ENCODE measurements at regions of chr6 and their contacts with region 1.

Region 1: DNA sequence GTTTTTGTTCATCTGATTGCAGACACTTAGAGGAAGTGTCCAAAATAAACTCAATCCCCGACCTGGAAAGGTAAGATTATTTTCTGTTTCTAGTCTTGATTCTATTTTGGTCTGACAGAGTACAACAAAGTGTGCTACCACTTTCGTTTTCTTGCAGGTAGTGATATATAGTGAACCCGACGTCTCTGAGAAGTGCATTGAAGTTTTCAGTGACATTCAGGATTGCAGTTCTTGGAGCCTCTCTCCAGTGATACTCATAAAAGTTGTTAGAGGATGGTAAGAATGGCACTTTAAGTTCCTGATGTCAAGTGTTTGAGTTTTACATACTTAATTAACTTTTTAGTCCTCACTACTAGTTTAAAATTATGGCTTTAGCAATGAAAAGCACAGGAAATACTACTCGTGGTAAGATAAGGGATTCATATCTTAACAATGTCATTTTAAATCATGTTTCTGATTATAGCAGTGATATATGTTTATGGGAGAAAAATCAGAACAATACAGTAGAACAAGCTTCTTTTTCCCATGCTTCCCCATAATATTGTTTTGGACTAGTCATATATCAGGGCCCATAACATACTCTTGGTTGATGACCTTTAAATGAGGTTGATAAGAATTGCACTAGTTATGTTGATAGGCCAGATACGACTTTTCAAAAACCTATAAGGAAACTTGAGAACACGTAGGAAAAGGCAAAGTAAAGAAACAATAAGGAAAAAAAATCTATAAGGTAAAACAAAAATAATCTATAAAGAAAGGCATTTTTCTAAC is 104.0 kb downstream of the RTN4IP1 start:
- DNase-seq: no peak
- ATAC-seq: peak; percentile 35
- H3K4me3 Mint-ChIP-seq: peak overlapping the region; percentile 83
- H3K27ac Mint-ChIP-seq: peak overlapping the region; percentile 89
- H3K4me1 Mint-ChIP-seq: peaks cover 81% of the 10 kb centered on the region
- H3K27me3 Mint-ChIP-seq: no peaks in the 10 kb centered on the region
- CTCF ChIP-seq: no peak

Region 2: DNA sequence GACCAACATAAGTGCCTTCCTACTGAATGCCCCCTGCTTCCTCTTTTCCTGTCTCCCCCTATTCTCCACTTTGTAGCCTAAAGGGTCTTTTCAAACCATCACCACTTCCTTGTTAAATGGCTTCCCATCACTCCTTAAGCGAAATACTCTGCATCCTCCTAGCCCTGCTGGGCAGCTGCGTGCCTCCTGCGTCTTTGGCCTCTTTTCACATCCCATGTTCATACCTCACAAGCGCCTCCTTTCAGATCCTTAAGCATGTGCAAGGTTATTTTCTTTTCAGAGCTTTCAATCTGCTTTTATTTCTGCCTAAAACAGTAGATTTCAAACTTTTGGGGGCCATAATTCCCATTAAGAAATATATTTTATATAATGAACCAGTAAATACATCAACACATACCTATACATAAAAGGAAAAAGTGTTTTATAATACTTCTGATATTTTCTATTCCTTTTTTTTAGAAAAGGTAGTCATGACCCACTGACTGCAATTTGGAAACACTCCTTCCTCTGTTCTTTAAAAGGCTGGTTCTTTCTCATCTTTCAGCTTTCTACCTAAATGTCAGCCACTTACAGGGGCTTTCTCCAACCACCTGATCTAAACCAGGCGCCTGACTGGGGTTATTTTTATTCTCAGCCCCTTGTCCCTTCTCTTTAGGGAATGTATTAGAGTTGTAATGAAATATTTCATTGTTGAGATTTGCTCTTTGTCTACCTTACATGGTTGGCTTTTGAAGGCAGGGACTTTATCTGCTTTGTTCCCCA is 355.1 kb before region 1 on chr6:
- CTCF ChIA-PET with region 1: no interaction called
- POLR2A ChIA-PET with region 1: no interaction called
- intact Hi-C with region 1: no loop called
- DNase-seq: no peak
- ATAC-seq: no peak
- H3K4me3 Mint-ChIP-seq: no peak overlapping the region
- H3K27ac Mint-ChIP-seq: peak overlapping the region; percentile 46
- H3K4me1 Mint-ChIP-seq: peaks cover 24% of the 10 kb centered on the region
- H3K27me3 Mint-ChIP-seq: no peaks in the 10 kb centered on the region
- CTCF ChIP-seq: no peak

Region 3: DNA sequence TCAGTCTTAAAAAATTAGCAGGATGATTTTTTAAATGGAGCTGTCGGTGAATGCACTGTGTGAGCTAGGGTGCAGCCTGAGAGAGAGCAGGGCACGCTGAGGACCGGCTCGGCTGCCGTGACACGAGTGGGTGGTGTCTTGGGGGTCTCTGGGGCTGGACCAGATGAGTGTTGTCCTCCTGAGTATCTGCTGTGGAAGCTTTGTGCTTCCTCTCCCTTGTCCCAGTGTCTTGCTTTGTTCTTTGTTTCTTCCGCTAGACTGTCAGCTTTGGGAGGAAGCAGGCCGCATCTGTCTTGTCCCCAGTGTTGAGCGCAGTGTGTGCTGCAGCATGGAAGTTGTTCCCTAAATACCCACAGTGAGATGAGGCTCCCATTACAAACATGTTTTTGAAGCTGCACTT is 14.6 kb after region 1 on chr6:
- CTCF ChIA-PET with region 1: interaction called, 6 read pairs
- POLR2A ChIA-PET with region 1: interaction called, 27 read pairs
- intact Hi-C with region 1: loop called (anchors 2 kb)
- DNase-seq: no peak
- ATAC-seq: no peak
- H3K4me3 Mint-ChIP-seq: peak overlapping the region; percentile 37
- H3K27ac Mint-ChIP-seq: peak overlapping the region; percentile 80
- H3K4me1 Mint-ChIP-seq: peaks cover 58% of the 10 kb centered on the region
- H3K27me3 Mint-ChIP-seq: no peaks in the 10 kb centered on the region
- CTCF ChIP-seq: no peak

Region 4: DNA sequence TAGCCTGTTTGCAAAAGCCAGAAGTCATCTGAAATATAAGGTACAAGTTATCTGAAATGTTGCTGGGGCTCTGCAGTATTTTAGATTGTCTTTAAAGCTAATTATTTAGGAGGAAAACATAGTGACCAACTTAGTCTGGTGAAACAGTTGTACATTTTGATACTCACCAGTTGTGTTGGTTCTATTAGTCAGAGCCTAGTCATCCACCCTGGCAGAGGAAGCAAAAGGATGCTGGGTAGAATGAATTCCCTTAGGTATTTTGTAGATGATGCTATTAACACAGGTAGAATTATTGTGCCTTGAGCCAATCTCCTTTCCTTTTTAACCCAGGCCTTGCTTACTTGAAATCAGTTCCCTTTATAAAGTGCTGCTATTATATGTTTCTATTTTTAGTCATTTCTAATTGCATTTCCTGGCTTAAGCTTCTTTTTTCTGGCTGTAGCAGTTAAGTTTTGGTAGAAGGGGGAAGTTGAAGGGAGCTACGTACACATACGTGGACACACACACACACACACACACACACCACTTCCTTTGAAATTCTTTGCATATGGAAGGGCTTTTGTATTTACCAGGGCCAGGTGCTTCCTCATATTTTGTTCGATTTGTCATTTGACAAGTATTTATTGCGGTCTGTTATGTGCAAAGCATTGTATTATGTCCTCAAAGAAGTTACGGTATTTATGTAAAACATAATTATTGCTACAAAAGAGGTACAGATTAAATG is 21.6 kb after region 1 on chr6:
- CTCF ChIA-PET with region 1: interaction called, 6 read pairs
- POLR2A ChIA-PET with region 1: interaction called, 51 read pairs
- intact Hi-C with region 1: loop called (anchors 1 kb)
- DNase-seq: no peak
- ATAC-seq: peak; percentile 81
- H3K4me3 Mint-ChIP-seq: peak overlapping the region; percentile 70
- H3K27ac Mint-ChIP-seq: peak overlapping the region; percentile 98
- H3K4me1 Mint-ChIP-seq: peaks cover 49% of the 10 kb centered on the region
- H3K27me3 Mint-ChIP-seq: no peaks in the 10 kb centered on the region
- CTCF ChIP-seq: no peak

Measured in activated B cell treated with CpG ODN at 0.5 μM for 24 hours (primary cell).